ENCODE measurements at regions of chr11 and their contacts with region 1.

Region 1: DNA sequence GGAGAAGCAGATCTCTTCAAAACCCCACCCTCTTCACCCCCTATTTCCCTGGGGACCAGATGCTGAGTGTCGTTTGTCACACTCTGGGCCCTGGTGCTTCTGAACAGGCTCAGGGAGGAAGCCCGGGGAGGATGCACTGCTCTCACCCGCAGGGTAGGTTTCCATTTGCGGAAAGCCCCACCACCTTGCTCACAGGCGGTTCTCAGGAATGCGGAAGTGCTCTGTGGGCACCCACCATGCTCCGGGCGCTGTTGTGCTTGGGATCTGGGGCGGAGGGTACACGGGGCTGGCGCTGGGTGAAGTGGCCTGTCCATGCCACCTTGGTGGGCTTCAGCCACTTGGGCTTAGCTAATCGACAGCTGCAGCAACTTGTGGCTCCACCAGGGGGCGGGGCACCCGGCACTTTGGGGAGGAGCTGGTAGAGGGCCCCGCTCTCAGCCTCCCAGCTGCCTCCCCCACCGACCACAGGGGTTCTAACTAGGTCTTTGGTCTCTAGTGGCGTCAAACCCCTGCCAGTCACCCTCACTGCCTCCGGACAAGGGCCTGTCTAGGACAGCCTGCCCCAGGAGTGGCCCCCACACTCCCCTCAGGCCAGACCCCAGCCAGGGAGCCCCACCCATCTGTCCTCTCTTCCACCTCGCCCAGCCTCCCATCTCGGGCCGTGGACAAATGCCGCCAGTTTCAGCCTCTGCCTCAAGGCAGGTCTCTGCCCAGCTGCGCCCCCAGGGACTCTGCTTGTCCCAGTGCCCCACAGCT is 7.4 kb downstream of the NDUFV1 start:
- DNase-seq: peak; percentile 67 to 94 (median 78)
- ATAC-seq: peak; percentile 96
- H3K4me3 ChIP-seq: peak overlapping the region; percentile 55
- H3K4me3 Mint-ChIP-seq: peak overlapping the region; percentile 89
- H3K27ac ChIP-seq: peak overlapping the region; percentile 92
- H3K27ac Mint-ChIP-seq: peak overlapping the region; percentile 96
- H3K4me1 ChIP-seq: peaks cover 37% of the 10 kb centered on the region
- H3K4me1 Mint-ChIP-seq: peaks cover 33% of the 10 kb centered on the region
- H3K27me3 ChIP-seq: peaks cover 0 to 3% of the 10 kb centered on the region in 2 experiments
- H3K27me3 Mint-ChIP-seq: no peaks in the 10 kb centered on the region
- CTCF ChIP-seq: peak; percentile 60

Region 2: DNA sequence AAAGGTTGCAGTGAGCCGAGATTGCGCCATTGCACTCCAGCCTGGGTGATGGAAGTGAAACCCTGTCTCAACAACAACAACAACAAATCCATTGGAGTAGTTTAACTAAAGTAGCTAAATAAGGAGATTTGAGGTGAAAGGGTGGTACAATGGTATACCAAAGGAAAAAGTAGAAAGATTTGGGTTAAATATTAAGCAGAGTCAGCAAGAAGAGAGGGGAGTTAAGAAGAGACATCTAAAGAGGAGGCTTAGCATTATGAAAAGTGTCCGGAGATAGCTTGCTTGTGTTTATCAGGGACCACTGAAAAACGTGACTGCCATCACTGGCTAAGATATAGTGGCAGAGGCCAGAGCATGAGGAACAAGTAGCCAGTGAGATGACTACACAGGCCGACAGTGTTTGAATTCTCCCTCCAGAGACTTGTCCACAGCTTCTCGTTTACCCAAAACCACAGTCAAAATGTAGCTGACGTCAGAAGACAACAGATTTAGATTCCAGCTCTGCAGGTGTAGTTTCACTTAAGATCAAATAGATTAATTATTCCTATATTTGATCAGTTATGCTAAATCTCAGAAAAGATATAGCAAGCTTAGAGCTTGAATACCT is 380.5 kb before region 1 on chr11:
- CTCF ChIA-PET with region 1: no interaction called
- POLR2A ChIA-PET with region 1: no interaction called
- intact Hi-C with region 1: no loop called
- DNase-seq: no peak
- ATAC-seq: no peak
- H3K4me3 ChIP-seq: no peak overlapping the region
- H3K4me3 Mint-ChIP-seq: no peak overlapping the region
- H3K27ac ChIP-seq: no peak overlapping the region
- H3K27ac Mint-ChIP-seq: peak overlapping the region; percentile 6
- H3K4me1 ChIP-seq: peaks cover 22% of the 10 kb centered on the region
- H3K4me1 Mint-ChIP-seq: peaks cover 28% of the 10 kb centered on the region
- H3K27me3 ChIP-seq: no peaks in the 10 kb centered on the region
- H3K27me3 Mint-ChIP-seq: no peaks in the 10 kb centered on the region
- CTCF ChIP-seq: no peak

Region 3: GRCh38 chr11:67583247-67584204 is 30.6 kb before region 1 on chr11 and contains the start of gene GSTP1:
- CTCF ChIA-PET with region 1: interaction called, 5 read pairs
- POLR2A ChIA-PET with region 1: interaction called, 16 read pairs
- intact Hi-C with region 1: no loop called
- DNase-seq: peak; percentile 54 to 90 (median 72)
- ATAC-seq: peak; percentile 77
- H3K4me3 ChIP-seq: peak within 1 kb of the TSS; percentile 58
- H3K4me3 Mint-ChIP-seq: peak within 1 kb of the TSS; percentile 92
- H3K27ac ChIP-seq: peak within 1 kb of the TSS; percentile 64 to 68
- H3K27ac Mint-ChIP-seq: peak within 1 kb of the TSS; percentile 85
- H3K4me1 ChIP-seq: peaks cover 34% of the 10 kb centered on the region
- H3K4me1 Mint-ChIP-seq: peaks cover 47% of the 10 kb centered on the region
- H3K27me3 ChIP-seq: peaks cover 0 to 3% of the 10 kb centered on the region in 2 experiments
- H3K27me3 Mint-ChIP-seq: no peaks in the 10 kb centered on the region
- CTCF ChIP-seq: peak; percentile 55
- total RNA-seq, gene GSTP1: 60.1 to 62.8 TPM

Region 4: GRCh38 chr11:67648140-67649123 is 34.3 kb after region 1 on chr11:
- CTCF ChIA-PET with region 1: no interaction called
- POLR2A ChIA-PET with region 1: interaction called, 12 read pairs
- intact Hi-C with region 1: no loop called
- DNase-seq: peak; percentile 21 to 78 (median 51)
- ATAC-seq: peak; percentile 92
- H3K4me3 ChIP-seq: no peak overlapping the region
- H3K4me3 Mint-ChIP-seq: peak overlapping the region; percentile 76
- H3K27ac ChIP-seq: no peak overlapping the region
- H3K27ac Mint-ChIP-seq: peak overlapping the region; percentile 27
- H3K4me1 ChIP-seq: peaks cover 48% of the 10 kb centered on the region
- H3K4me1 Mint-ChIP-seq: peaks cover 32% of the 10 kb centered on the region
- H3K27me3 ChIP-seq: no peaks in the 10 kb centered on the region
- H3K27me3 Mint-ChIP-seq: no peaks in the 10 kb centered on the region
- CTCF ChIP-seq: peak; percentile 48

Region 5: GRCh38 chr11:67680696-67681470 is 66.7 kb after region 1 on chr11:
- CTCF ChIA-PET with region 1: no interaction called
- POLR2A ChIA-PET with region 1: no interaction called
- intact Hi-C with region 1: no loop called
- DNase-seq: no peak
- ATAC-seq: no peak
- H3K4me3 ChIP-seq: no peak overlapping the region
- H3K4me3 Mint-ChIP-seq: no peak overlapping the region
- H3K27ac ChIP-seq: no peak overlapping the region
- H3K27ac Mint-ChIP-seq: no peak overlapping the region
- H3K4me1 ChIP-seq: no peaks in the 10 kb centered on the region
- H3K4me1 Mint-ChIP-seq: no peaks in the 10 kb centered on the region
- H3K27me3 ChIP-seq: peaks cover under 1 to 1% of the 10 kb centered on the region in 2 experiments
- H3K27me3 Mint-ChIP-seq: peaks cover 5% of the 10 kb centered on the region
- CTCF ChIP-seq: no peak

Measured in CD4-positive, alpha-beta T cell (primary cell).